ENCODE measurements at regions of chr4 and their contacts with region 1.

Region 1: GRCh38 chr4:122577808-122578781 is 42.8 kb downstream of the IL21 start:
- DNase-seq: peak in 1 of 2 experiments; percentile 64
- H3K4me3 ChIP-seq: no peak overlapping the region
- H3K27ac ChIP-seq: no peak overlapping the region
- H3K4me1 ChIP-seq: no peaks in the 10 kb centered on the region
- H3K27me3 ChIP-seq: no peaks in the 10 kb centered on the region
- CTCF ChIP-seq: peak in 2 of 3 experiments; percentile 69 to 78; a peak in 3 of 4 replicates
- EP300 ChIP-seq: no peak
- POLR2A ChIP-seq: no peak
- RAD21 ChIP-seq: peak; percentile 55 to 69

Region 2: DNA sequence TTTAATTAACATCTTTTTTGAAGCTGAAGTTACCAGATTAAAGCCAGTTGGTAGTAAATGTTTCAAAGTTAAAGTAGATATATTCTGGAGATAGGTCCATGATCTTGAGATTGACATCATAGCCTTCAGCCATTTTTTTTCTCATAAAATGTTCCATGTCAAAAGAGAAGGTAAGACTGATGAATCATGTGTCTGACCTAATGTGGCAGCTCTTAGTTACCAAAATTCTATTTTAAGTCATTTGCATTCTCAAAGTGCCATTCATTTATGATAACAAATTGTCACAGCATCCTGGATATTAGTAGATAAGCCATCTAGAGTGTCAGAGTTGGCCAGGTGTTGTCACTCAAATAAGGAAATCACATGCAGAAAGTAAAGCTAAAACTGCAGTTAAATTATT is 265.1 kb before region 1 on chr4:
- CTCF ChIA-PET with region 1: interaction called, 18 read pairs
- POLR2A ChIA-PET with region 1: no interaction called
- DNase-seq: no peak
- H3K4me3 ChIP-seq: no peak overlapping the region
- H3K27ac ChIP-seq: no peak overlapping the region
- H3K4me1 ChIP-seq: no peaks in the 10 kb centered on the region
- H3K27me3 ChIP-seq: no peaks in the 10 kb centered on the region
- CTCF ChIP-seq: no peak
- EP300 ChIP-seq: no peak
- POLR2A ChIP-seq: no peak
- RAD21 ChIP-seq: no peak

Region 3: GRCh38 chr4:122356317-122356808 is 221.7 kb before region 1 on chr4:
- CTCF ChIA-PET with region 1: interaction called, 12 read pairs
- POLR2A ChIA-PET with region 1: no interaction called
- DNase-seq: no peak
- H3K4me3 ChIP-seq: no peak overlapping the region
- H3K27ac ChIP-seq: no peak overlapping the region
- H3K4me1 ChIP-seq: no peaks in the 10 kb centered on the region
- H3K27me3 ChIP-seq: no peaks in the 10 kb centered on the region
- CTCF ChIP-seq: no peak
- EP300 ChIP-seq: no peak
- POLR2A ChIP-seq: no peak
- RAD21 ChIP-seq: no peak

Region 4: DNA sequence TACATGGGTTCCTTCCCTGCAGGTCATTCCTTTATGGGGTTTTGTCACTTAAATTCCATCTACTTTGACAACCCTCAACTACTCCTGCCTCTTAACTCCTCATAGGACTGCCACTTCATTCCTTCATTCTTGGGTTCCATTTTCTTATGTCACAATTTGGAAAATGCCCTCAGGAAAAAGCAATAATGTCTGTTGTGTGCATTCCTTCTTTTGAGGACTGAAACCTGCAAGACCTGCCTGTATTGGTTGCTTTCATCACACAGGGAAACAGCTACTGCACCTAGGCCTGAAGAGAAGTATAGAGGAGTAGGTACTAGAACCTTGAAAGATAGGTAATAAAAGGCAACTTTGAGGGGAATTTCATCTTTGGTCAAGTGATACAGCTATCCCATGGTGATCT is 129.2 kb before region 1 on chr4:
- CTCF ChIA-PET with region 1: interaction called, 10 read pairs
- POLR2A ChIA-PET with region 1: no interaction called
- DNase-seq: no peak
- H3K4me3 ChIP-seq: no peak overlapping the region
- H3K27ac ChIP-seq: no peak overlapping the region
- H3K4me1 ChIP-seq: no peaks in the 10 kb centered on the region
- H3K27me3 ChIP-seq: no peaks in the 10 kb centered on the region
- CTCF ChIP-seq: no peak
- EP300 ChIP-seq: no peak
- POLR2A ChIP-seq: no peak
- RAD21 ChIP-seq: no peak

Region 5: GRCh38 chr4:122508083-122508482 is 70.0 kb before region 1 on chr4:
- CTCF ChIA-PET with region 1: no interaction called
- POLR2A ChIA-PET with region 1: no interaction called
- DNase-seq: no peak
- H3K4me3 ChIP-seq: no peak overlapping the region
- H3K27ac ChIP-seq: no peak overlapping the region
- H3K4me1 ChIP-seq: no peaks in the 10 kb centered on the region
- H3K27me3 ChIP-seq: no peaks in the 10 kb centered on the region
- CTCF ChIP-seq: no peak
- EP300 ChIP-seq: no peak
- POLR2A ChIP-seq: no peak
- RAD21 ChIP-seq: no peak

Region 6: DNA sequence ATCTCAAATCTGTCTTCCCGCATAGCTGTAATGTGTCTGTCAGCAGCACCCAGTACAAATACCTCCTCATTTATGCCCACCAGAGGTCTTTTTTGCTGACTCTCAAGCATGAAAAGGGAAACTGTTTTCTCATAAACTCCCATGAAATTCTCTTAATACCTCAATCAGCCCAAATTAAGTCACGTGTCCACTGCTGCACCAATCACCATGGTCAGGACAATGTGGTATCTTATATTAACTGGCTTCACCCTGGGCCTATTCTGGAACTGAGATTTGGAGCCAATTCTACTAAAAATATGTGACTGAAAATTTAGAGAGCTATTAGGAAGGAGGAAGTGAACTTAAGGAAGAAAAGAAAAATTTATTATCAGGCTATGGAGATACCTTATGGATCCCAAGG is 15.6 kb before region 1 on chr4:
- CTCF ChIA-PET with region 1: interaction called, 12 read pairs
- POLR2A ChIA-PET with region 1: no interaction called
- DNase-seq: no peak
- H3K4me3 ChIP-seq: no peak overlapping the region
- H3K27ac ChIP-seq: no peak overlapping the region
- H3K4me1 ChIP-seq: peaks cover 0 to 4% (median 0%) of the 10 kb centered on the region in 4 experiments; a peak in 1 of 7 replicates
- H3K27me3 ChIP-seq: no peaks in the 10 kb centered on the region
- CTCF ChIP-seq: no peak
- EP300 ChIP-seq: no peak
- POLR2A ChIP-seq: no peak
- RAD21 ChIP-seq: no peak

Region 7: DNA sequence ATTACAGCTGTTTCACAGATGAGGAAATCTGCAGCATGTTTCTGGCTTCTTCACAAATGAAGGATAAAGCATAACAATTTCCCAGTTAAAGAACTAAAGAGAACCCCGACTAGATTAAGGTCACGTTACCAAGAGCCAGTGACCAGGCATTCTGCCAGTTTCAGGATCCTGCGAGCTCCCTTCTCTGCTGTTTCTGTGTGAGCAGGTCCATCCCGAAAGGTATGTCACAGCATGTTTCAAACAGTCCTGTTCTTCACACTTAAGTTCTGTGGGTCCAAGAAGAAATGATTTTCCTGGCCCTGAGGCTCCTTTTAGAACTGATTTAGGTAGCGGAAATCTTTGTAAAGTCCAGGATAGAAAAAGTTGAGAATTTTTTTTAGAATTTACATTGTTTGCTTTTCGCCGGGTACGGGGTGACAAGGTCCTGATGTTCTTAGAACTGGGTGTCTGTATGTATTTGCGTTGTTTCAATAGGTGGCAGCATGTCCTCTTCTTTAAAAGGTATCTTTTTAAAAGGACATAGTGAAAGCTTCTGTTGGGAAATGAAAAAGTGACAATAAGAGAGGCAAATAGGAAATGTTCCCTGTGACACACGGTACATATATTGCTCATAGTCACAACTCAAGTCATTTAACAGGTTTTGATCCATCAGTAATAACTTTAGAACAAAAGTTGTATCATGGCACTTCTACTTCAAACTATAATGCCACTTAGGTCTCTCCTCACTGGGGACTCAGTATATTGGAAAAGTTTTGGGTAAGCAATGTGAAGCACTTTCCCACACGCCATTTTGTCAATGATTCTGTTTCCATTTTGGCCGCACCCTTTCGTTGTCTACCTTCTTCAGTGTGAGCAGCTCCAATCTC is 24.4 kb after region 1 on chr4:
- CTCF ChIA-PET with region 1: interaction called, 12 read pairs
- POLR2A ChIA-PET with region 1: no interaction called
- DNase-seq: no peak
- H3K4me3 ChIP-seq: no peak overlapping the region
- H3K27ac ChIP-seq: no peak overlapping the region
- H3K4me1 ChIP-seq: peaks cover 2 to 13% (median 7%) of the 10 kb centered on the region in 4 experiments; a peak in 4 of 7 replicates
- H3K27me3 ChIP-seq: no peaks in the 10 kb centered on the region
- CTCF ChIP-seq: peak in 2 of 3 experiments; percentile 38 to 39; a peak in 2 of 4 replicates
- EP300 ChIP-seq: no peak
- POLR2A ChIP-seq: no peak
- RAD21 ChIP-seq: peak; percentile 67 to 75

Region 8: GRCh38 chr4:122879001-122879400 is 300.9 kb after region 1 on chr4:
- CTCF ChIA-PET with region 1: no interaction called
- POLR2A ChIA-PET with region 1: no interaction called
- DNase-seq: no peak
- H3K4me3 ChIP-seq: no peak overlapping the region
- H3K27ac ChIP-seq: no peak overlapping the region
- H3K4me1 ChIP-seq: no peaks in the 10 kb centered on the region; a peak in 1 of 7 replicates
- H3K27me3 ChIP-seq: no peaks in the 10 kb centered on the region
- CTCF ChIP-seq: no peak
- EP300 ChIP-seq: no peak
- POLR2A ChIP-seq: no peak
- RAD21 ChIP-seq: no peak

Region 9: GRCh38 chr4:122930862-122931261 is 352.8 kb after region 1 on chr4:
- CTCF ChIA-PET with region 1: interaction called, 12 read pairs
- POLR2A ChIA-PET with region 1: no interaction called
- DNase-seq: no peak
- H3K4me3 ChIP-seq: no peak overlapping the region
- H3K27ac ChIP-seq: no peak overlapping the region
- H3K4me1 ChIP-seq: no peaks in the 10 kb centered on the region
- H3K27me3 ChIP-seq: peaks cover 0 to 2% (median 0%) of the 10 kb centered on the region in 4 experiments; a peak in 1 of 7 replicates
- CTCF ChIP-seq: peak in 1 of 3 experiments; percentile 21; a peak in 2 of 4 replicates
- EP300 ChIP-seq: no peak
- POLR2A ChIP-seq: no peak
- RAD21 ChIP-seq: peak in 1 of 2 experiments; percentile 16; a peak in 2 of 4 replicates